ENCODE measurements at regions of chr12 and their contacts with region 1.

Region 1: DNA sequence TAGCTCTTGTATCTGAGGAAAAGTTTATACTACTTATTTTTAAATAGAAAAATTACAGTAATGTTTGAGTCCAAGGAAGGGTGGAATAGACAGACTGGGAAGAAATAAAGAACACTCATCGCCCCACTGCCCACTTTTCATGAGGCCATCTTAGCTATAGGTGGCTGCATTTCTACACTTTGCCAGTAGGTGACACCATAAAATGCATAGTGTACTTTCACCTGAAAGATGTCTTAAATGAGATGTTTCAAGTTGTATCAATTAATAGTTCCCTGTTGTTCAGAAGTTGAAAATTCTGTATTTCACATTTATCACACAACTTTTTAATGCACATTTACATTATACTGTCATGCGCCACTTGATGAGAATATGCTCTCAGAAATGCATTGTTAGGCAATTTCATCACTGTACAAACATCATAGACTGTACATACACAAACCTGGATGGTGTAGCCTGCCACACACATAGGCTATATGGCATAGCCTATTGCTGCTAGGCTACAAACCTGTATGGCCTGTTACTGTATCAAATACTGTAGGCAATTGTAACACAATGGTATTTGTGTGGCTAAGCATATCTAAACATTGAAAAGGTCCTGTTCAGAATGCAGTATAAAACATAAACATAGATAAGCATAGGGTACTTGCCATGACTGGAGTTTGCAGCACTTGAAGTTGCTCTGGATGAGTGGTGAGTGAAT is 27.6 kb downstream of the PMCH start:
- DNase-seq: no peak
- H3K4me3 Mint-ChIP-seq: no peak overlapping the region
- H3K27ac Mint-ChIP-seq: no peak overlapping the region
- H3K4me1 Mint-ChIP-seq: peaks cover 15% of the 10 kb centered on the region
- H3K27me3 Mint-ChIP-seq: no peaks in the 10 kb centered on the region

Region 2: GRCh38 chr12:101919447-101919846 is 250.6 kb before region 1 on chr12:
- CTCF ChIA-PET with region 1: no interaction called
- POLR2A ChIA-PET with region 1: no interaction called
- intact Hi-C with region 1: loop called (anchors 5 kb)
- DNase-seq: no peak
- H3K4me3 Mint-ChIP-seq: no peak overlapping the region
- H3K27ac Mint-ChIP-seq: no peak overlapping the region
- H3K4me1 Mint-ChIP-seq: peaks cover 6% of the 10 kb centered on the region
- H3K27me3 Mint-ChIP-seq: no peaks in the 10 kb centered on the region

Region 3: GRCh38 chr12:102119674-102120563 is 50.2 kb before region 1 on chr12 and contains the starts of genes NUP37 and PARPBP:
- CTCF ChIA-PET with region 1: interaction called, 3 read pairs
- POLR2A ChIA-PET with region 1: no interaction called
- intact Hi-C with region 1: loop called (anchors 1 kb)
- DNase-seq: peak; percentile 95
- H3K4me3 Mint-ChIP-seq: peak within 1 kb of the TSS; percentile 87
- H3K27ac Mint-ChIP-seq: peak within 1 kb of the TSS; percentile 82
- H3K4me1 Mint-ChIP-seq: peaks cover 19% of the 10 kb centered on the region
- H3K27me3 Mint-ChIP-seq: no peaks in the 10 kb centered on the region
- total RNA-seq, gene NUP37: 86.8 to 89.5 TPM
- total RNA-seq, gene PARPBP: 24.0 to 25.9 TPM

Region 4: GRCh38 chr12:102197789-102198188 is 27.7 kb after region 1 on chr12 and contains the start of gene PMCH:
- CTCF ChIA-PET with region 1: no interaction called
- POLR2A ChIA-PET with region 1: no interaction called
- intact Hi-C with region 1: loop called (anchors 1 kb)
- DNase-seq: no peak
- H3K4me3 Mint-ChIP-seq: no peak within 1 kb of the TSS
- H3K27ac Mint-ChIP-seq: no peak within 1 kb of the TSS
- H3K4me1 Mint-ChIP-seq: peaks cover 8% of the 10 kb centered on the region
- H3K27me3 Mint-ChIP-seq: no peaks in the 10 kb centered on the region
- total RNA-seq, gene PMCH: 0.59 TPM in 1 of 2 experiments, not detected in the other

Region 5: GRCh38 chr12:102215992-102216691 is 46.1 kb after region 1 on chr12:
- CTCF ChIA-PET with region 1: no interaction called
- POLR2A ChIA-PET with region 1: no interaction called
- intact Hi-C with region 1: no loop called
- DNase-seq: no peak
- H3K4me3 Mint-ChIP-seq: no peak overlapping the region
- H3K27ac Mint-ChIP-seq: no peak overlapping the region
- H3K4me1 Mint-ChIP-seq: no peaks in the 10 kb centered on the region
- H3K27me3 Mint-ChIP-seq: no peaks in the 10 kb centered on the region

Region 6: DNA sequence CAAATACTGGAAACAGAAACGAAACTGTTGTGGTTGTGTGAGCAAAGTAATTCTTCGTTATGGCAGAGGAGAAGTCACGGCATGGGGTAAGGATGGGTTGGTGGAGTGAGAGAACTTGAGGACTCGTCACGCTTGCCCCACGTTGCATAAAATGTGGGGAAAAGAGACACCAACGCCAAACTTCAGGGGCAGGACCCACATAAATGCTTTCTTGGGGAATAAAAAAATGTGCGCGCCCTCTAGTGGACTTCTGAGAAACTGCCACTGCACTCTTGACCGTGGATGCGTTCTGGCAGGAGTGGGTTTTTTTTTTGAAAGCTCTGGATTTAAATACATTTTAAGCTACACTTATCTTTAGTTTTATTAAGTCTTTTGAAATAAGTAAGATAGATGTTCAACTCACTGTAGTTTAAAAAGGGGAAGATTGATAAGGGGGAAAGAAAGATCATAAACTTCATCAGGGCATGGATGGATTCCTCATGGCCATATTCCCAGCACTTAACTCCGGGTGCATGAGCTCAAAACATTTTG is 314.4 kb after region 1 on chr12:
- CTCF ChIA-PET with region 1: interaction called, 13 read pairs
- POLR2A ChIA-PET with region 1: no interaction called
- intact Hi-C with region 1: loop called (anchors 1 kb)
- DNase-seq: peak; percentile 71
- H3K4me3 Mint-ChIP-seq: no peak overlapping the region
- H3K27ac Mint-ChIP-seq: peak overlapping the region; percentile 76
- H3K4me1 Mint-ChIP-seq: peaks cover 17% of the 10 kb centered on the region
- H3K27me3 Mint-ChIP-seq: peaks cover 3% of the 10 kb centered on the region

Region 7: DNA sequence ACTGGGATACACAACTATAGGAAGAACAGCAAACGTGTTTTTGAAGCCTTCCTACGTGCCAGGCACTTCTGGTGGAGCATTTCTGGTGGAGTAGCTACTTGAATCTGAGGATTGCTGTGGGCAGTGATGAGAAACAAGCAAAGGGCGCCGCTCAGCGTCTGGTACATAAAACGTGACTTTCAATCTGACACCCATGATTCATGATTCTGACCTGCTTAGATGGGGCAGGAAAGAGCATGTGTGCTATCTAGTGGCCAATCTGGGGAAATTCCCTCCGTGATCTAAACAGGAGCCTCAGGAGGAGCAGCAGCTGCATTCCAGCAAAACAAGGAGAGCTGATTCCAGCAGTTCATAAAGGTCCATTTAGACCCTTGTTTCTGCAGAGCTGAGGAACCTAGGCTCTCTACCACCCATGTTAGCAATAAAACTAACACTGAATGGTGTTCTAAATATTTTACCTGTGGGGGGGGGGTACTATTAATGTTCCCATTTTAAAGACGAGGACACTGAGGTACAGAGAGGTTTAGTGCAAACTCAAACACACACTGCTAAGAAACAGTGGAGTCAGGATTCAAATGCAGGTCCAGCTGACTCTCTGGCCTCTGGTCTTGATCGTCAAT is 709.2 kb after region 1 on chr12:
- CTCF ChIA-PET with region 1: no interaction called
- POLR2A ChIA-PET with region 1: no interaction called
- intact Hi-C with region 1: loop called (anchors 5 kb)
- DNase-seq: peak; percentile 47
- H3K4me3 Mint-ChIP-seq: no peak overlapping the region
- H3K27ac Mint-ChIP-seq: no peak overlapping the region
- H3K4me1 Mint-ChIP-seq: no peaks in the 10 kb centered on the region
- H3K27me3 Mint-ChIP-seq: peaks cover 11% of the 10 kb centered on the region